ENCODE measurements at regions of chr2 and their contacts with region 1.

Region 1: GRCh38 chr2:231227309-231228162 is 29.1 kb downstream of the ARMC9 start:
- DNase-seq: peak; percentile 62
- ATAC-seq: peak; percentile 99
- H3K4me3 Mint-ChIP-seq: no peak overlapping the region
- H3K27ac Mint-ChIP-seq: no peak overlapping the region
- H3K4me1 Mint-ChIP-seq: no peaks in the 10 kb centered on the region
- H3K27me3 Mint-ChIP-seq: no peaks in the 10 kb centered on the region

Region 2: GRCh38 chr2:230721712-230722111 is 505.8 kb before region 1 on chr2:
- CTCF ChIA-PET with region 1: no interaction called
- POLR2A ChIA-PET with region 1: no interaction called
- intact Hi-C with region 1: no loop called
- DNase-seq: no peak
- ATAC-seq: no peak
- H3K4me3 Mint-ChIP-seq: peak overlapping the region; percentile 1
- H3K27ac Mint-ChIP-seq: peak overlapping the region; percentile 82
- H3K4me1 Mint-ChIP-seq: peaks cover 86% of the 10 kb centered on the region
- H3K27me3 Mint-ChIP-seq: no peaks in the 10 kb centered on the region

Region 3: DNA sequence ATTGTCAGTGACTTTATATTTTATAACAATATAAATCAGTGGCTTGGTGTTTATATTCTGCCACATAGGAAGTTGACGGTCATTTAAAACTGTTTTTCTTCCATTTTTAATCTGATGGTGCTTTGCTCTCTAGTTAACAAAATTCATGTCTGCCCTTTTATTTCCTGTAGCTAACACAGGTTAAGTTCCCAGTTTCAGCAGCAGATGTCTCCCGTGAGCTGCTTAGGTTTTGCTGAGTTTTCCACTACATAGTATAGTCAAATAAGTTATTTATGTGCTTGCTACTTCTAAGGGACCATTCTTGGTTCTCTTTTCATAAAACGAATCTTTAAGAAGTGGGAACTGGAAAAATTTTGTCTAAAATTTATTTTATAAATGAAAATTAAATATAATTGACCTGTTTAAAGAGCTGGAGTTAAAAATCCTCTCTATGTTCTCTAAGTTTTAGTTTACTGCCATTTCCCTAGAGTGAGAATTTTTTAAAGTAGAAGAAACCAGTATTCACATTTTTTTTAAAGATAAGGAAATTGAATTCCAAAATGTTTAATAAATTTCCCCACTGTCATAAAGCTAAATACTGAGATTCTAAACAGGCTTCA is 123.3 kb before region 1 on chr2:
- CTCF ChIA-PET with region 1: interaction called, 8 read pairs
- POLR2A ChIA-PET with region 1: no interaction called
- intact Hi-C with region 1: loop called in 1 of 2 experiments (anchors 1 kb)
- DNase-seq: peak; percentile 76
- ATAC-seq: peak; percentile 93
- H3K4me3 Mint-ChIP-seq: no peak overlapping the region
- H3K27ac Mint-ChIP-seq: no peak overlapping the region
- H3K4me1 Mint-ChIP-seq: peaks cover 14% of the 10 kb centered on the region
- H3K27me3 Mint-ChIP-seq: no peaks in the 10 kb centered on the region

Region 4: GRCh38 chr2:231238689-231239088 is 11.2 kb after region 1 on chr2:
- CTCF ChIA-PET with region 1: interaction called, 24 read pairs
- POLR2A ChIA-PET with region 1: no interaction called
- intact Hi-C with region 1: no loop called
- DNase-seq: no peak
- ATAC-seq: no peak
- H3K4me3 Mint-ChIP-seq: no peak overlapping the region
- H3K27ac Mint-ChIP-seq: no peak overlapping the region
- H3K4me1 Mint-ChIP-seq: no peaks in the 10 kb centered on the region
- H3K27me3 Mint-ChIP-seq: no peaks in the 10 kb centered on the region

Region 5: DNA sequence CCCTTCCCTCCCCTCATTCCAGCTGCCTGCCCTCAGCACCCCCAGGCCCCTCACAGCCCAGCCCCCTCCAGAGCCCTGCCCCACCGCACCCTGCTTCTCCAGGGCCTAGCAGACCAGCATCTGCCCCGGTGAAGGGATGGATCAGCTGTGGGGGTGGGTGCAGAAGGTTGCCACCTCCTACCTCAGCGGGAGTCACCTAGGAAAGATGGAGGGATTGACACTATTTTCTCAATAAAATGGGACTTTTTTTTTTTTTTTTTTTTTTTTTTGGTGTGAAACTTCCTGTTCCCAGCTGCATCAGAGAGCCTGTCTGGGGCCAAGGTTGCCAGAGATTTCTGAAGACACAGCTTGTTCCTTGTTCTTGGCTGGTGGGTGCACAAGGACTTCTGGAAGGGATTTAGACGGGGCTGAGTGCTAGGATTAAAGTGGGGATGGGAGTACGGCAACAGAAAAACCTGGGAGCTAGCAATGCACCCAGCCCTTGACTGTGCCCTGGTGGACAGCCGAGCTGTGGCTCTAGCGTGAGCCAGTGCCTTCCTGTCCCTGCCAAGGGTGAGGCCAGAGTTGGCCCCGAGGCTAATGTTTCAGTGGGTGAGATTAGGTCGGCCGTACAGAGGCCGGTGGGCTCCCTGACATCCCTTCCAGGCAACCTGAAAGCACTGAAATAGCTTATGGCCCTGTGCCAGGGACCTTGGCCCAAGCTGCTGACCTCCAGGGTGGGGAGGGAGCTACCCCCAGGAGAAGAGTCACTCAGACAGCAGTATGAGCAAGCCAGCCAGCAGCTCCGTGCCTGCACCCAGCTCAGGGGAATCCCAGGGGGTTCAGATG is 172.5 kb after region 1 on chr2:
- CTCF ChIA-PET with region 1: interaction called, 8 read pairs
- POLR2A ChIA-PET with region 1: no interaction called
- intact Hi-C with region 1: loop called in 1 of 2 experiments (anchors 1 kb)
- DNase-seq: no peak
- ATAC-seq: no peak
- H3K4me3 Mint-ChIP-seq: no peak overlapping the region
- H3K27ac Mint-ChIP-seq: no peak overlapping the region
- H3K4me1 Mint-ChIP-seq: peaks cover 9% of the 10 kb centered on the region
- H3K27me3 Mint-ChIP-seq: peaks cover 8% of the 10 kb centered on the region

Region 6: GRCh38 chr2:231452799-231453508 is 225.4 kb after region 1 on chr2:
- CTCF ChIA-PET with region 1: interaction called, 12 read pairs
- POLR2A ChIA-PET with region 1: no interaction called
- intact Hi-C with region 1: loop called (anchors 1 to 5 kb)
- DNase-seq: peak; percentile 26
- ATAC-seq: peak; percentile 26
- H3K4me3 Mint-ChIP-seq: no peak overlapping the region
- H3K27ac Mint-ChIP-seq: no peak overlapping the region
- H3K4me1 Mint-ChIP-seq: peaks cover 18% of the 10 kb centered on the region
- H3K27me3 Mint-ChIP-seq: no peaks in the 10 kb centered on the region

Region 7: DNA sequence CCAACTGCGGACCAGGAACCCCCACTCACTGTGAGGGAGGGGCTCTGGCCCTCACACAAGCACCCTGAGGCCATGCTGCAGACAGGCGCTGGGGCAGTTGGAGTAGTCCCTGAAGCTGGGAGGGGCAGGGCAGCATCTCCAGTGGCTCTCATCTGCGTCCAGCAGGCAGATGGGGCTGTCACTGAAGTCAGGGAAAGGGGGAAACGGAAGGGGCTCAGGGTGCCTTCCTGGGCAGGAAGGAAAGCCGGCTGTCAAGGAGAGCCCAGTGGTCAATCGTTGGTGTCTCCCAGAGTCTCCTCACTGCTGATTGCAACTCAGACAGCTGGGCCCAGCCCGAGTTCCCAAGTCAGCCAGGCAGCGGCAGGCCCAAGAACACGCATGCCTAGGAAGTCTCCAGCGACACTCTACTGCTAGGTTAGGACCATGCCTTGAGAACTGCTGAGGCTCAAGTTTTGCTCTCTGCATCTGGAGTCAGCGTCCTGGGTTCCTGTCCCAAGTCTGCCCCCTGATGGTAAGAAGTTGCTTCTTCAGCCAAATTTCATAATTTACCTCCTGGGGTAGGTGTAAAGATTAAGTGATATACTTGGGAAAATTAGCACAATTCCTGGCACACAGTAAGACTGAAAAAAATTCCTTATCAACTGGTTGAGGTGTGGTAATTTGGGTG is 330.2 kb after region 1 on chr2:
- CTCF ChIA-PET with region 1: no interaction called
- POLR2A ChIA-PET with region 1: no interaction called
- intact Hi-C with region 1: loop called in 1 of 2 experiments (anchors 5 kb)
- DNase-seq: peak; percentile 73
- ATAC-seq: peak; percentile 98
- H3K4me3 Mint-ChIP-seq: no peak overlapping the region
- H3K27ac Mint-ChIP-seq: no peak overlapping the region
- H3K4me1 Mint-ChIP-seq: peaks cover 12% of the 10 kb centered on the region
- H3K27me3 Mint-ChIP-seq: peaks cover 3% of the 10 kb centered on the region